ENCODE measurements at regions of chr7 and their contacts with region 1.

Region 1: DNA sequence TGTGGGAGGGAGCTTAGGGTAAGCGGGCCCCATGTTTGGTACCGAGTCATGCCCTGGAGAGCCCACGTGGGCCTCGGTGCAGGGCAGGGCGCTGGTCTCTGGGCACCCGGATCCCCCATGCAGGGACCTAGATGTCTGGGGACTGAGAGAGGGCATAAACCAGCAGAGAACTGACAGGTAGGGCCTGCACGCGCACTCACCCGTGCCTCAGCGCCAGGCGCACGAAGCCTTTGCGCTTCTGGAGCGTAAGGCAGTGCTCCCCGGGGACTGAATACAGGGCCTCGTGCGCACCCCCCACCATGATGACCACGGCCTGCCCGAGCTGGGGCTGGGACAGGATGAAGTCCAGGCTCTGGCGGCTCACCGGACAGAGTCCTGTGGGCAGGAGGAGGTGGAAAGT is 2.8 kb downstream of the MOGAT3 start:
- DNase-seq: no peak
- H3K4me3 ChIP-seq: no peak overlapping the region
- H3K27ac ChIP-seq: no peak overlapping the region
- H3K4me1 ChIP-seq: peaks cover 0 to 23% (median 10%) of the 10 kb centered on the region in 4 donors
- H3K27me3 ChIP-seq: peaks cover 50% of the 10 kb centered on the region
- CTCF ChIP-seq: no peak
- EP300 ChIP-seq: no peak
- POLR2A ChIP-seq: no peak

Region 2: GRCh38 chr7:101108330-101108857 is 89.6 kb before region 1 on chr7:
- in situ Hi-C with region 1: no loop called
- intact Hi-C with region 1: no loop called
- DNase-seq: no peak
- H3K4me3 ChIP-seq: no peak overlapping the region
- H3K27ac ChIP-seq: no peak overlapping the region
- H3K4me1 ChIP-seq: peaks cover 0 to 6% (median 0%) of the 10 kb centered on the region in 4 donors
- H3K27me3 ChIP-seq: no peaks in the 10 kb centered on the region
- CTCF ChIP-seq: no peak
- EP300 ChIP-seq: no peak
- POLR2A ChIP-seq: no peak

Region 3: DNA sequence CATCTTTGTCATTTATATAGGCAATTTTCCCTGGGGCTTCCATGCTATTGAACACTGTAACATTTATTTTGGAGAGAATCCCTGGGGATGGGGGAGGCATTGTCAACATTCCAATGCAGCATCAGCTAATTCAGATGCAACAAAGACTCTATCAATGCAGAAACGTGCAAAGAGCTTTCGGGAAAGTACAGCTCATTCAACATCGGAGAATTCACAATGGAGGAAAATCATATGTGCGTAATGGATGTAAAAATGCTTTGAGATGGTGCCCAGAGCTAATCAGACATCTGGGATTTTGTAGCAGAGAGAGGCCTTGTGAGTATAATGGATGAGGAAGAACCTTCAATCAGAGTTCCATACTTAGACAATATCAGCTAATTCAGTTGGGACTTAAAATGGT is 75.2 kb after region 1 on chr7:
- in situ Hi-C with region 1: loop called in 1 of 4 experiments (anchors 10 kb)
- intact Hi-C with region 1: no loop called
- DNase-seq: no peak
- H3K4me3 ChIP-seq: no peak overlapping the region
- H3K27ac ChIP-seq: no peak overlapping the region
- H3K4me1 ChIP-seq: no peaks in the 10 kb centered on the region
- H3K27me3 ChIP-seq: peaks cover 3% of the 10 kb centered on the region
- CTCF ChIP-seq: no peak
- EP300 ChIP-seq: no peak
- POLR2A ChIP-seq: no peak

Region 4: GRCh38 chr7:101299511-101300464 is 101.8 kb after region 1 on chr7:
- in situ Hi-C with region 1: no loop called
- intact Hi-C with region 1: loop called (anchors 10 kb)
- DNase-seq: no peak
- H3K4me3 ChIP-seq: no peak overlapping the region
- H3K27ac ChIP-seq: no peak overlapping the region
- H3K4me1 ChIP-seq: peaks cover 0 to 4% (median 0%) of the 10 kb centered on the region in 4 donors
- H3K27me3 ChIP-seq: peaks cover 100% of the 10 kb centered on the region
- CTCF ChIP-seq: no peak
- EP300 ChIP-seq: no peak
- POLR2A ChIP-seq: no peak